SK-N-SH (cell line): ENCODE measurements at regions of chr22 and their contacts with region 1.

Region 1: DNA sequence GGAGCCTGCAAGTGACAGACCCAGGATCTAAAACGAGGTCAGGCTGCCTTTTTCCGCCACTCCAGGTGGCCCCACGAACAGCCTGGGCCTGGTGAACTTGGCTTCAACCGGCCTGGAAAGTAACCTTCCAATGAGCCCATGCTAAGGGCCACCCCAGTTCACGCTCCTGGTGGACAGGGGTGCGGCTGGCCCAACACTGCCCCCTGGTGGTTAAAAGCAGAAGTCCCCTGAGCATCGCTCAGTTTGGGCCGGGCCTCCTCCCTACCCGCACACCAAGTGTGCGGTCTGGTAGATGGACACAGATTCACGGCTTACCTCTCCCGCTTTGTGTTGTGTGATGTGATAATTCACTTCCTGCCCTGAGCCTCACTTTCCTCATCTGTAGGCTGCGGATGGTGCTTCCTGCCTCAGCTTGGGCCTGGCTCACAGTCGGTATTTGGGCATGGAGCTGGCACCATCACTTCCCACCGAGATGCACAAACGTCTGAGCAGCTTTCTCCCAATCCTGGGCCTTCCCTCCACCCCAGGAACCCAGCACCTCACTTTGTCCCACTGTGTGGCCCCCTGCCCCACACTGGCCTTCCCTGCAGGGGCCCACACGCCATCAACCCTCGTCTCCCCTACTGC is 13.7 kb upstream of the SEC14L3 start:
- DNase-seq: peak; percentile 92
- H3K4me3 ChIP-seq: peak overlapping the region in 1 of 2 experiments; percentile 42; a peak in 1 of 4 replicates
- H3K27ac ChIP-seq: no peak overlapping the region
- H3K4me1 ChIP-seq: no peaks in the 10 kb centered on the region; a peak in 1 of 4 replicates
- H3K27me3 ChIP-seq: no peaks in the 10 kb centered on the region; the same call in 1 of the 2 replicates
- CTCF ChIP-seq: peak; percentile 89
- EP300 ChIP-seq: no peak
- RAD21 ChIP-seq: peak; percentile 78

Region 2: DNA sequence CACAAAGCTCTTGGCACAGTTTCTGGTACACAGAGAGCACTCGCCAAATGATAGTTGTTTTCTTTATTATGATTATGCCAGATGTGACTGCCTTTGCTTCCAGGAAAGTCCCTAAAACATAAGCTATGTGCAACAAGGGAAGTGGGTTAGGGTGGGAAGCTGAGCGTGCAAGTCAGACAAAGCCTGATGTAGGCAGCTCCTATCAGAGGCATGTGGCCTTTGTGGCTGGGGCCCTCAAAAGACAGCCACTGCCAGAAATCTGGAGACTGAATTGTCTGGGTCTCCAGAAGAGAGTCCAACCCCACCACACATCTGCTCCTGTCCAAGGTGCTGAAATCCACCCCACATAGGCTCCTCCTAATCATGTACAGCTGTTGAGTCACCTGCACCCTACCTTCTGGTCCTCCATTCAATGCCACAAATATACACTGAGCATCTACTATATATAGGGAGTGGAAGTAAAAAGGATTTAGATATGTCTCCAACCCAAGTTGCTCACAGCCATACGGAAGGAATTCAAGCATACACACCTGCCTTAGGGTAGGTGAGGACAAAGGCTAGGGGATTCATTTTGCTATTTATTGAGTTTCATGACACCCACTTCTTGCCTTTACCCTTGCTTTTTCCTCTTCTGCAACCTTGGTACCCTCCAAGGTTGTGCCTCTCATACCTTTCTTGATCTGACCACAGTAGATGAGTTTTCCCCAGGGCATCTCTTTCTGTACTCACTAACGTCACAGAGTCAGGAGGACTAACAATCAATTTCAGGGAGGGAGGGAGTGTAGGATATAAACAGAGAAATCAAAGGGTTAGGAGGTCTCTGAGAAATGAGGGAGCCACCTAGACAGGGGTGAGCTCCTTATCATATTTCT is 26.1 kb before region 1 on chr22:
- CTCF ChIA-PET with region 1: interaction called, 10 read pairs
- POLR2A ChIA-PET with region 1: no interaction called
- DNase-seq: no peak
- H3K4me3 ChIP-seq: no peak overlapping the region
- H3K27ac ChIP-seq: no peak overlapping the region
- H3K4me1 ChIP-seq: no peaks in the 10 kb centered on the region
- H3K27me3 ChIP-seq: no peaks in the 10 kb centered on the region
- CTCF ChIP-seq: no peak
- EP300 ChIP-seq: no peak
- RAD21 ChIP-seq: no peak

Region 3: DNA sequence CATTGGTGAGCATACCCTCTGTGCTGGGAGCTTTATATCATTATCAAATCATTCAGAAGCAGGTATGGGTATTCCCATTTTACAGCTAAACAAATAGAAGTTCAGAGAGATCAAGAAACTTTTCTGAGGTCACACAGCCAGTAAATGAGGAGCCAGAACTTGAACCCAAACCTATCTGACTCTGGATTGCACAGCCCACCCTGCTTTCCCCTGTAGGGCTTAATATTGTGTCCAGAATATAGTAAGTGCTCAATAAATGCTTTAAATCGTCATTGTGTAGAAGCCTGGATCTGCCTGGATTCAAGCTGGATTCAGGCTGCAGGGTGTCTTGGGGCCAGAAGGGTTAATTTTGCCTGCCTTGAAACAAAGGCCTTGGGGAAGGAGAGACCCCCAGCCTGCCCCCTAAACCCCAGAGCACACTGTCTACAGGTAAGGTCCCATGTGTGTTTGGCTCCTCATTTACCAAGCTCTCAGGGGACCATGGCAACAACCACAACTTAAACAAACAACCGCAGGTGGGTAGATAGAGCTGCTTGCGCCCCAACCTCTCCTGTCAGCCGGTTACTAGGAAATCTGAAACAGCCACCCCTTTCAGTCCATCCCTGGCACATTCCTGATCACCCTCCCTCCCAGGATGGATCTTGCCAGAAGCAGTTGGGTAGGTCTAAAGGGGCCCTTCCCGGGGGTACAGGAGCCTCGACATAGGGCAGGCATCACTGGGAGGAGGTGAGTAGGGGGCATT is 10.6 kb before region 1 on chr22:
- CTCF ChIA-PET with region 1: interaction called, 28 read pairs
- POLR2A ChIA-PET with region 1: no interaction called
- DNase-seq: no peak
- H3K4me3 ChIP-seq: no peak overlapping the region
- H3K27ac ChIP-seq: no peak overlapping the region
- H3K4me1 ChIP-seq: no peaks in the 10 kb centered on the region
- H3K27me3 ChIP-seq: peaks cover 42% of the 10 kb centered on the region; the same call in 1 of the 2 replicates
- CTCF ChIP-seq: no peak
- EP300 ChIP-seq: no peak
- RAD21 ChIP-seq: no peak

Region 4: GRCh38 chr22:30681831-30682230 is 196.4 kb after region 1 on chr22:
- CTCF ChIA-PET with region 1: no interaction called
- POLR2A ChIA-PET with region 1: no interaction called
- DNase-seq: no peak
- H3K4me3 ChIP-seq: no peak overlapping the region
- H3K27ac ChIP-seq: peak overlapping the region in 1 of 2 experiments; percentile 67; a peak in 2 of 4 replicates
- H3K4me1 ChIP-seq: peaks cover 0 to 27% of the 10 kb centered on the region in 2 experiments; a peak in 1 of 4 replicates
- H3K27me3 ChIP-seq: no peaks in the 10 kb centered on the region
- CTCF ChIP-seq: no peak
- EP300 ChIP-seq: no peak
- RAD21 ChIP-seq: no peak